ENCODE measurements at regions of chr16 and their contacts with region 1.

Region 1: GRCh38 chr16:67719048-67719777 is at the start of gene GFOD2:
- DNase-seq: peak; percentile 97
- H3K4me3 Mint-ChIP-seq: peak within 1 kb of the TSS; percentile 96
- H3K27ac Mint-ChIP-seq: peak within 1 kb of the TSS; percentile 94
- H3K4me1 Mint-ChIP-seq: peaks cover 33% of the 10 kb centered on the region
- H3K27me3 Mint-ChIP-seq: no peaks in the 10 kb centered on the region
- total RNA-seq, gene GFOD2: 19.6 and 20.3 TPM in 2 replicates

Region 2: DNA sequence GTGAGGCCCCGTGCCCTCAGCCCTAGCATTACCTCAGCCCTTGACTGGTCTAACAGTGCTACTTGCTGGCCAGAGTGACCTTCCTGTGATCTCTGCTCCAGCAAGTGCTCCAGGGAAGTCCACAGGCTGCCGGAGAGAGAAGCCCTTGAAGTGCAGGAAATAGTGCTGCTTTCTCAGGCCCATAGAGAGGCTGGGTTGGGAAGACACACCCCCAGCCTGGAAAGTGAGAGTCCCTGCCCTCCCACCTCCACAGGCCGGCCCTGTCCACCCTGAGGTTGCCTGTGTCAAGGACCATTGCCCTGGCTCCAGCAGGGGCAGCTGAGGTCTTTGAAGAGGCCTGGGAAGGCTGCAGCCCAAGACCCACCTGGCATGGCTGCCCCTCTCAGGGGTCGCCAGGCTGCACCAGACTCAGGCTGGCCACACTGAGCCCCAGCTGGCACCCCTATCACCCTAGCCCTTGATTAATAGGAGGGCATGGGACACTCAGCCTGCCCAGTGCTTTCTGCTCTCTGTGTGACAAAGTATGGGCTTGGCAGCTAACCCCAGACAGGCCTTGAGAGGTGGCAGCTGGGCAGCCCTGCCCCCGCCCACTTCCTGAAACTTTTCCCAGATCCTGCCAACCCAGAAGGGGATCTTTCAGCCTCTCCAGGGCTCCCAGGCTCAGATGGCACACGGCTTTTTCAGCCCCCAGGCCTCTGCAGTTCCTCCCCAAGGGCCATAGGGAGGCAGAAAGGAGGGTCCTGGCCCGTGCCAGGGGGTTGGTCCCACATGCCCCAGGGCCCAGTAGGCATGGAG is 259.9 kb before region 1 on chr16:
- intact Hi-C with region 1: no loop called
- DNase-seq: no peak
- H3K4me3 Mint-ChIP-seq: no peak overlapping the region
- H3K27ac Mint-ChIP-seq: no peak overlapping the region
- H3K4me1 Mint-ChIP-seq: no peaks in the 10 kb centered on the region
- H3K27me3 Mint-ChIP-seq: no peaks in the 10 kb centered on the region

Region 3: GRCh38 chr16:67667817-67668494 is 51.3 kb before region 1 on chr16:
- intact Hi-C with region 1: loop called (anchors 2 kb)
- DNase-seq: peak; percentile 76
- H3K4me3 Mint-ChIP-seq: peak overlapping the region; percentile 83
- H3K27ac Mint-ChIP-seq: no peak overlapping the region
- H3K4me1 Mint-ChIP-seq: peaks cover 5% of the 10 kb centered on the region
- H3K27me3 Mint-ChIP-seq: no peaks in the 10 kb centered on the region